ENCODE measurements at regions of chr7 and their contacts with region 1.

Region 1: GRCh38 chr7:80288175-80289122 is 153.8 kb downstream of the GNAI1 start:
- DNase-seq: no peak
- ATAC-seq: no peak
- H3K4me3 ChIP-seq: no peak overlapping the region
- H3K27ac ChIP-seq: no peak overlapping the region
- H3K4me1 ChIP-seq: peaks cover 0 to 8% (median 0%) of the 10 kb centered on the region in 12 donors
- H3K27me3 ChIP-seq: no peaks in the 10 kb centered on the region
- CTCF ChIP-seq: peak in 7 of 12 donors; percentile 10 to 52 (median 47)
- POLR2A ChIP-seq: no peak

Region 2: DNA sequence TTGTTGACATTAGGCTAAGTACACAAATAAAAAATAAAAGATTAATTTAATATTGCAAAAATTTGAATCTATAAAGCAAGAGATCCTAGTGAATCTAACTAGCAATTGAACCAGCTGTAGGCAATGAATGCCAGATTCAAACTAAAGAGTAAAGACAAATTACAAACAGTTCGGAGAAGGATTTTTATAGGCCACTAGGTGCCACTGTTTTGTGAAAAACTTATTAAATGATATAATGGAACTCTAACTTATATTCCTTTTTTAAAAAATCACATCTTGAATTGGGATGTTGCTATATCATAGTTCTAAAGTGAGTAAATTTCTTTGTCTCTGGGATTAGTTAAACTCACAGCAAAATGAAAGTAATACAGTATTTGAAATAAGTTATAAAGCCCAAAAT is 192.9 kb before region 1 on chr7:
- intact Hi-C with region 1: loop called in 4 of 10 experiments (anchors 10 kb)
- DNase-seq: no peak
- ATAC-seq: no peak
- H3K4me3 ChIP-seq: no peak overlapping the region
- H3K27ac ChIP-seq: no peak overlapping the region
- H3K4me1 ChIP-seq: no peaks in the 10 kb centered on the region
- H3K27me3 ChIP-seq: no peaks in the 10 kb centered on the region
- CTCF ChIP-seq: peak; percentile 38 to 68 (median 48)
- POLR2A ChIP-seq: no peak

Region 3: GRCh38 chr7:80134536-80135320 is 153.7 kb before region 1 on chr7 and contains the start of gene GNAI1:
- intact Hi-C with region 1: loop called in 5 of 10 experiments (anchors 2 to 10 kb)
- DNase-seq: peak; percentile 66 to 84 (median 72)
- ATAC-seq: peak; percentile 48 to 93 (median 86)
- H3K4me3 ChIP-seq: peak within 1 kb of the TSS; percentile 62 to 99 (median 97)
- H3K27ac ChIP-seq: peak within 1 kb of the TSS; percentile 63 to 94 (median 86)
- H3K4me1 ChIP-seq: peaks cover 0 to 27% (median 11%) of the 10 kb centered on the region in 12 donors
- H3K27me3 ChIP-seq: peaks cover 0 to 5% (median 0%) of the 10 kb centered on the region in 9 donors
- CTCF ChIP-seq: peak in 10 of 12 donors; percentile 1 to 62 (median 47)
- POLR2A ChIP-seq: peak in 1 of 2 donors; percentile 70
- total RNA-seq, gene GNAI1: 9.9 to 26.1 (median 16.5) TPM

Region 4: GRCh38 chr7:80218723-80219122 is 69.7 kb before region 1 on chr7:
- intact Hi-C with region 1: loop called in 1 of 10 experiments (anchors 10 kb)
- DNase-seq: no peak
- ATAC-seq: no peak
- H3K4me3 ChIP-seq: no peak overlapping the region
- H3K27ac ChIP-seq: no peak overlapping the region
- H3K4me1 ChIP-seq: no peaks in the 10 kb centered on the region
- H3K27me3 ChIP-seq: no peaks in the 10 kb centered on the region
- CTCF ChIP-seq: no peak
- POLR2A ChIP-seq: no peak

Region 5: DNA sequence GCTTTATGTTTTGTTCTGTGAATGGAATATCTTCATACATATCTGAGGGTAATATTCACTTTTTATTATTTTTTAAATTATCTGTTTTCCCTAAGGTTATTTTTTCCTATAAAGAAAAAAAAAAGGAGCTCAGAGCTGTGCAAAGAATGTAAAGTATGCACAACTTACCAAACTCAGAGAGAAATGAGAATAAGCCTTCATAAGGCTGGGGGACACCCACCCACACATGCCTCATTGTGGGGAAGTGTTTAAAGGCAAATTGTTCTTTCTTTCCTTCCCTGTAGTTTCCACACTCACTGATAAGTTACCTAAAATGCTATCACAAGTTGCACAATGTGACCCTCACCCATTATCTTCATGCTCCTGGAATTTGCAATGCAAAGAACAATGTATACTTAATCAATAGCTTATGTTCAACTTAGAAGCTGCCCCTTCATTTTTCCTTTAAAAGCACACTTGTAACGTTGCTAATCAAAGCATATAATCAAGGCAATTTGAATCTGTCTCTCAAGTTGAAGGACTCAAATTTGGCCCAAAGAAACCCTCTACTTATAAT is 115.3 kb after region 1 on chr7:
- intact Hi-C with region 1: no loop called
- DNase-seq: no peak
- ATAC-seq: no peak
- H3K4me3 ChIP-seq: no peak overlapping the region
- H3K27ac ChIP-seq: no peak overlapping the region
- H3K4me1 ChIP-seq: no peaks in the 10 kb centered on the region
- H3K27me3 ChIP-seq: no peaks in the 10 kb centered on the region
- CTCF ChIP-seq: no peak
- POLR2A ChIP-seq: no peak

Measured in heart left ventricle (tissue), 16 donors.